B cell (primary cell): ENCODE measurements at regions of chr1 and their contacts with region 1.

Region 1: GRCh38 chr1:9629445-9630201 is 21.9 kb upstream of the PIK3CD start:
- DNase-seq: peak; percentile 90
- ATAC-seq: peak; percentile 51
- H3K4me3 ChIP-seq: peak overlapping the region; percentile 51 to 85 (median 70)
- H3K4me3 Mint-ChIP-seq: peak overlapping the region; percentile 86
- H3K27ac ChIP-seq: peak overlapping the region; percentile 79 to 88
- H3K27ac Mint-ChIP-seq: peak overlapping the region; percentile 97
- H3K4me1 ChIP-seq: peaks cover 37 to 70% of the 10 kb centered on the region in 2 donors
- H3K4me1 Mint-ChIP-seq: peaks cover 69% of the 10 kb centered on the region
- H3K27me3 ChIP-seq: no peaks in the 10 kb centered on the region
- H3K27me3 Mint-ChIP-seq: no peaks in the 10 kb centered on the region
- CTCF ChIP-seq: no peak

Region 2: GRCh38 chr1:9413148-9413876 is 216.3 kb before region 1 on chr1:
- CTCF ChIA-PET with region 1: no interaction called
- POLR2A ChIA-PET with region 1: no interaction called
- intact Hi-C with region 1: loop called (anchors 5 kb)
- DNase-seq: peak; percentile 72
- ATAC-seq: peak; percentile 73
- H3K4me3 ChIP-seq: peak overlapping the region in 3 of 5 experiments; percentile 12 to 27 (median 12)
- H3K4me3 Mint-ChIP-seq: peak overlapping the region; percentile 49
- H3K27ac ChIP-seq: peak overlapping the region; percentile 41 to 67
- H3K27ac Mint-ChIP-seq: peak overlapping the region; percentile 85
- H3K4me1 ChIP-seq: peaks cover 35 to 59% of the 10 kb centered on the region in 2 donors
- H3K4me1 Mint-ChIP-seq: peaks cover 51% of the 10 kb centered on the region
- H3K27me3 ChIP-seq: no peaks in the 10 kb centered on the region
- H3K27me3 Mint-ChIP-seq: no peaks in the 10 kb centered on the region
- CTCF ChIP-seq: no peak

Region 3: DNA sequence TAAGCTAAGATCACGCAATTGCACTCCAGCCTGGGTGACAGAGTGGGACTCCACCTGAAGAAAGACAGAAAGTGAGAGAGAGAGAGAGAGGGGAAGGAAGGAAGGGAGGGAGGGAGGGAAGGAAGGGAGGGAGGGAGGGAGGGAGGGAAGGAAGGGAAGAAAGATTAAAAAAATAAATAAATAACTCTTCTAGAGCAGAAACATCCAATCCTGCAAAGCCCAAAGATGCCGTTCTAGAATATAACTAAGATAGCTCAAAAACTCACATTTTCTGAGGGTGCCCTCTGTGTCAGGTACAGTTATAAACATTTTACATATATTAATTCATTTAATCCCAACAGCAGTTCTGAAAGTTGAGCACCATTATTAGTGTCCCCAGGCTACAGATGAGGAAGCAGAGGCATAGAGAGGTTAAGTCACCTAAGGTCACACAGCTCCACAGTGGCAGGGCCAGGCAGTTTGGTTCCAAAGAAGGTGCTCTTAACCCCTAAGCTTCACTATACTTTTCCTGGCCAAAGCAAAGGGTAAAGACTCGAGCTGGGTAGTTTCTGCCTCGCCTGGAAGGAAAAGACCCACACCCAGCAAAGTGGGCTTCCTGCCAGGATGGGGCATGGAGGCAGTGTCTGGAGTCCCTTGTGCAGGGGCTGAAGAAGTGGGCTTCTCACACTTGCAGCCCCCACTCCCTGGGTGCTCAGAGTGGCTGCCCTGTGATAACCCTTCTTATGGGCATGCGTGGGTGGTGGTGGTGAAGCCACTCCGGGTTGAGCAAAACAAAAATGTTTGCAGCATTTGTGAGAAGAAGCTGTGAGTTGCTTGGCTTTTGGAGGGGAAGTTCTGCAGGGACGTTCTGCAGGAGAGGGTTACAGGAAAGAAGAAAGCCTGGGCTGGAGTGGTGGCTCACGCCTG is 14.0 kb after region 1 on chr1:
- CTCF ChIA-PET with region 1: interaction called, 57 read pairs
- POLR2A ChIA-PET with region 1: interaction called, 7 read pairs
- intact Hi-C with region 1: no loop called
- DNase-seq: no peak
- ATAC-seq: peak; percentile 36
- H3K4me3 ChIP-seq: no peak overlapping the region
- H3K4me3 Mint-ChIP-seq: peak overlapping the region; percentile 83
- H3K27ac ChIP-seq: no peak overlapping the region
- H3K27ac Mint-ChIP-seq: peak overlapping the region; percentile 86
- H3K4me1 ChIP-seq: peaks cover 43 to 57% of the 10 kb centered on the region in 2 donors
- H3K4me1 Mint-ChIP-seq: peaks cover 55% of the 10 kb centered on the region
- H3K27me3 ChIP-seq: no peaks in the 10 kb centered on the region
- H3K27me3 Mint-ChIP-seq: no peaks in the 10 kb centered on the region
- CTCF ChIP-seq: no peak

Region 4: DNA sequence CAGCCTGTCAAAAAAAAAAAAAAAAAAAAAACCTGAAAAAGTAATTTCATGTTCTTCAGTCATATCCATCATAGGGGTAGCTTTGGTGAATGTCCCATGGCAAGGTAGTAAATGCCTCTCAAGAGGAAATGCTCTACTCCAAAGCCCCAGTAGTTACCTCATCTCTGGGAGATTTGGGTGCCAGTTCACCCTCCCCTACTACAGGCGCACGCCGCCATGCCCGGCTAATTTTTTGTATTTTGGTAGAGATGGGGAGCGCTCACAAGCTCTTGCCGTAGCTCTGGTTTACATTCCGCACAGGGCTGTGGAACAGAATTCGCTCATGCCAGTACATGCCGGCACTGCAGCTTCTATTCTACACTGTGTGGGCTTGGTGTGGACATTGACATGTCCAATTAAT is 35.6 kb after region 1 on chr1:
- CTCF ChIA-PET with region 1: interaction called, 29 read pairs
- POLR2A ChIA-PET with region 1: interaction called, 4 read pairs
- intact Hi-C with region 1: no loop called
- DNase-seq: no peak
- ATAC-seq: no peak
- H3K4me3 ChIP-seq: no peak overlapping the region
- H3K4me3 Mint-ChIP-seq: no peak overlapping the region
- H3K27ac ChIP-seq: peak overlapping the region in 1 of 2 donors; percentile 48
- H3K27ac Mint-ChIP-seq: peak overlapping the region; percentile 34
- H3K4me1 ChIP-seq: peaks cover 16 to 45% of the 10 kb centered on the region in 2 donors
- H3K4me1 Mint-ChIP-seq: peaks cover 50% of the 10 kb centered on the region
- H3K27me3 ChIP-seq: no peaks in the 10 kb centered on the region
- H3K27me3 Mint-ChIP-seq: no peaks in the 10 kb centered on the region
- CTCF ChIP-seq: no peak

Region 5: DNA sequence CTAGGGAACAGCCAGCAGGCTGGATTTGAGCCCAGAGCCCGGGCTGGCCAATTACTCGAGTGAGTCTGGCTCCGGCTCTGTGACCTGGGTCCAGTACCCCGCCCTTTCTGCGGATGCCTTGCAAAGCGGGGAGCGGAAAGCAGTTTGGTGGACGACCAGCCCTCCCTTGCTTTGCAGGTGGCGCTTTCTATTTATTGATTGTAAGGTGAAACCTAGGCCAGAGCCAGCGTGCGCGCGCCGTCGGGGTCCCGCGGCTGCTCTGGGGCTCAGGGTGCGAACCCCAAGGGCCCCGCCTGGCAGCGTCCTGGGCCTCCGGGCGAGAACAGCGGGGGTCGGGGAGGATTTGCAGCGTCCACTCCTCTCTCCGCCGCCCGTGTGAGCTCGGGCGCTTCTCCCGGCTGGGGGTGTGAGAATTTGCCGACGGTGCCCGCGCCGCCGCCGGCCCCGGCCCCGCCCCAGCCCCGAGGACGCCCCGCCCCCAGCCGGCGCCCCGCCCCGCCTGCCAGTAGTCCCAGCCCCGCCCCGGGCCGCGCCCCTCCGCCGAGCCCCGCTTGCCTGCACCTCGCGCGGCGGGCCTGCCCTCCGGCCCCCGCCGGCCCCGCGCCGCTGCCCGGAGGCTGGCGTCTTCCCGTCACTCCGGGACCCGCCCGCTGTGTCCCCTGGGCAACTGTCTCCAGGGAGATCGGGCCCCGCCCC is 59.5 kb after region 1 on chr1:
- CTCF ChIA-PET with region 1: interaction called, 119 read pairs
- POLR2A ChIA-PET with region 1: interaction called, 13 read pairs
- intact Hi-C with region 1: loop called (anchors 1 kb)
- DNase-seq: peak; percentile 81
- ATAC-seq: peak; percentile 83
- H3K4me3 ChIP-seq: peak overlapping the region; percentile 34 to 68 (median 59)
- H3K4me3 Mint-ChIP-seq: peak overlapping the region; percentile 85
- H3K27ac ChIP-seq: peak overlapping the region in 1 of 2 donors; percentile 47
- H3K27ac Mint-ChIP-seq: peak overlapping the region; percentile 50
- H3K4me1 ChIP-seq: peaks cover 59 to 63% of the 10 kb centered on the region in 2 donors
- H3K4me1 Mint-ChIP-seq: peaks cover 64% of the 10 kb centered on the region
- H3K27me3 ChIP-seq: no peaks in the 10 kb centered on the region
- H3K27me3 Mint-ChIP-seq: no peaks in the 10 kb centered on the region
- CTCF ChIP-seq: no peak

Region 6: DNA sequence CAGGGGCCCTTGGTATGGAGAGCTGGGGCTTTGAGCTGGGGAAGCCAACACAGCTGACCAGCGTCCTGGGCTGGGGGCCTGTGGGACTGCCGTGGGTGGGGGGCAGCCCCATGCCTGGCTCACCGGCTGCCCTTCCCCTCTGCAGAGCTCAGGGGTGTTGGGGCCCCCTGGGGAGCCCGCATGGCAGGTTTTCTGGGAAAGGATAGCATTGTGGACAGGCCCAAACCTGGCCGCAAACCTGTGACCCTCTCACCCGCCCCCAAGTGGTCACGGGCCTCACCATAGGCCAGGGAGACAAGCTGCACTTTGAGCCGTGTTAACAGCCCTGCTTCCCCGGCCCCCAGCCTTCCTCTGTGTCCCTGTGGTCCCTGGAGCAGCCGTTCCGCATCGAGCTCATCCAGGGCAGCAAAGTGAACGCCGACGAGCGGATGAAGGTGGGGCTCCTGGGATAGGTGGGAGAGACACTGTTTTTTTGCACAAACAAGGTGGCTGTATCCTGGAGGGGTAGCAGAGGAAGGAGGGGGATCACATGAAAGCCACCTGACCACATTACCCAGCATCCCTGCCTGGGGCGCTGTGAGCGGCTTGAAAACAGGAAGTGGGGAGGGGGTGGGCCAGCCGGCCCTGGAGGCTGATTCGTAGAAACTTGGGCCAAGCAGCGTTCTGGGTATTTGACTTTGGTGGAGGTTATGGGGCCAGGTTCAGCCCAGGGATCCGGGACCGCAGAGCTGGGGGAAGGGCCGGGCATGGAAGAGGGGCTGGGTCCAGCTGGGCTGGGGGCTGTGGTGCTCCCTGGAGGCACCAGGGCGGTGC is 87.8 kb after region 1 on chr1:
- CTCF ChIA-PET with region 1: interaction called, 147 read pairs
- POLR2A ChIA-PET with region 1: interaction called, 52 read pairs
- intact Hi-C with region 1: loop called (anchors 1 kb)
- DNase-seq: peak; percentile 94
- ATAC-seq: peak; percentile 85
- H3K4me3 ChIP-seq: peak overlapping the region in 4 of 5 experiments; percentile 38 to 61 (median 50)
- H3K4me3 Mint-ChIP-seq: peak overlapping the region; percentile 81
- H3K27ac ChIP-seq: peak overlapping the region; percentile 90 to 96
- H3K27ac Mint-ChIP-seq: peak overlapping the region; percentile 95
- H3K4me1 ChIP-seq: peaks cover 54 to 69% of the 10 kb centered on the region in 2 donors
- H3K4me1 Mint-ChIP-seq: peaks cover 38% of the 10 kb centered on the region
- H3K27me3 ChIP-seq: no peaks in the 10 kb centered on the region
- H3K27me3 Mint-ChIP-seq: no peaks in the 10 kb centered on the region
- CTCF ChIP-seq: peak; percentile 12

Region 7: DNA sequence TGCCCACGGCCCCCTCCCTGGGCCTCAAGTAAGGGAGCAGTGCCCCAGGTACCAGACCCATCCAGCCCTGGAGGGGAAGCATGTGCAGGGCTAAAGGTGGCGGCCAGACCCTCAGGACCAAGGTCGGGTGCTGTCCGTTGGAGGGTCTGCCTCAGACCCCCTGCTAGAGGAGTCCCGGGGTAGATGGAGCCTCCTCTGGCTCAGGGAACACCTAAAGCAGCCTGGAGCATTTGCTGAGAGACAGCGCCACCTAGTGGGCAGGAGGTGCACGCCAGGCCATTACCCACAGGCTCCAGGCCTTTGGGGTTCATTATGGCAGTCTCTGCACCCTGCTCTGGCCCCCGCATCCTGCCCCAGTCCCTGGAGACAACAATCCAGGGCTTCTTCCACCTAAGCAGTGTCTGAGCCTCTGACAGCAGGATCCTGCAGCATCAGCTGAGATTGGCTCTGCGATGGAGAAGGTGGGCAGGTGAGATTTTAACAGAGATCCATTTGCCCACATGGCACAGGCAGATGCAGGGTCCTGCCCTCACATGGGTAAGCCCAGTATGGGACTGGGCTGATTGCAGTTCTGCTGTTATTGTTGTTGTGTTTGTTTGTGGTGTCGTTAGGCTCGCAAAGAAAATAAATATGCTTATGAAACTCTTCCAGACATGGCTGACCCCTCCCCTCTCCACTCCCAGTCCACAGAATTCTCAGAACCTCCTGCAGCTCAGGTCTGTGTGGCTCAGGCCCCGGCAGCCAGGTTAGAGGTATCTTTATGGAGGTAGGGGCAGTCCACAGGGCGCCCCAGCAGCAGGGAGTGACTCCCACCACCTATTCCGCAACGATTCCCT is 238.0 kb after region 1 on chr1:
- CTCF ChIA-PET with region 1: interaction called, 15 read pairs
- POLR2A ChIA-PET with region 1: no interaction called
- intact Hi-C with region 1: no loop called
- DNase-seq: peak; percentile 88
- ATAC-seq: peak; percentile 96
- H3K4me3 ChIP-seq: no peak overlapping the region
- H3K4me3 Mint-ChIP-seq: no peak overlapping the region
- H3K27ac ChIP-seq: no peak overlapping the region
- H3K27ac Mint-ChIP-seq: no peak overlapping the region
- H3K4me1 ChIP-seq: peaks cover 0 to 8% of the 10 kb centered on the region in 2 donors
- H3K4me1 Mint-ChIP-seq: peaks cover 3% of the 10 kb centered on the region
- H3K27me3 ChIP-seq: no peaks in the 10 kb centered on the region
- H3K27me3 Mint-ChIP-seq: no peaks in the 10 kb centered on the region
- CTCF ChIP-seq: peak; percentile 96